ENCODE measurements at regions of chr1 and their contacts with region 1.

Region 1: GRCh38 chr1:8727809-8728213 is 89.6 kb downstream of the RERE start:
- DNase-seq: no peak
- H3K4me3 ChIP-seq: no peak overlapping the region
- H3K27ac ChIP-seq: no peak overlapping the region
- H3K4me1 ChIP-seq: peaks cover 0 to 14% (median 4%) of the 10 kb centered on the region in 4 donors
- H3K27me3 ChIP-seq: no peaks in the 10 kb centered on the region
- CTCF ChIP-seq: no peak

Region 2: DNA sequence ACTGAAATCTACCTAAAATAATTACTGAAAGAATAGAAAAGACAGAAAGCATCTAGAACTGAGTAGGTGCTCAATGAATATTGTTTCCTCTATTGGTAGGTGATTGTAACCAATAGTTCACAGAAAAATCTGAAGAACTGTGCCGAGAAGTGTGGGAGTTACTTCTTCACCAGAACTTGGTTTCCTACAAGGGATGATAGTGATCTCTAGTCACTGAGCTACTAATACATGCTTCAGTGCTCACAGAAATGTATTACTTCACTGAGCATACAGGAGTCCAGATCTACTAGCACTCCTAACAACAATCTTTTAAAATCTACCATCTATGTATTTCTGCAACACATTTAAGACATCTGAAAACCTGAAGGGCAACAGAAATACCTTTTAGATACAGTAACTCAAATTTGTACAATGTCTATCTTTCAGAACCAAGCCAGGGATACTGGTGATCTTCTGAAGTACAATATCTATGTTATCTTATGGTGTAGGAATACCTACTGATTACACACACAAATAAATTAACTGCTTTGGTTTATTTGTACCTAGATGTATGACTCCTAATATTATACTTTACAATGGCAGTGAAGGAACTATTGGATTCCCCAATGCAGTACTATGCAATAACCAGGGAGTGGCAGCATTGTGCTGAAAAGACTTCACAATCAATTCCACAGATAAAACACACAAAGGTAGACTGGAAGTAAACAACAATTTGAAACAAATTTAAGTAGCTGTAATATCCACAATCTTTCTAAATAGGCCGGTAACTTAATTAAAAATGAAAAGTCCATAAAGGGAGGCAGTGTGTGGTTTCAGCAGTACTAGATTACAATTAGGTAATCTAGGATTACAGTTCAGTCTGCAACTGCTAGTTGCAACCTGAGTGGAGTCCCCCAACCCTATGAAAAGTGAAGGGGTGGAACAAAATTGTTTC is 166.9 kb before region 1 on chr1:
- intact Hi-C with region 1: loop called (anchors 5 kb)
- DNase-seq: no peak
- H3K4me3 ChIP-seq: no peak overlapping the region
- H3K27ac ChIP-seq: no peak overlapping the region
- H3K4me1 ChIP-seq: peaks cover 0 to 16% (median 0%) of the 10 kb centered on the region in 4 donors
- H3K27me3 ChIP-seq: no peaks in the 10 kb centered on the region
- CTCF ChIP-seq: peak; percentile 93 to 94

Region 3: DNA sequence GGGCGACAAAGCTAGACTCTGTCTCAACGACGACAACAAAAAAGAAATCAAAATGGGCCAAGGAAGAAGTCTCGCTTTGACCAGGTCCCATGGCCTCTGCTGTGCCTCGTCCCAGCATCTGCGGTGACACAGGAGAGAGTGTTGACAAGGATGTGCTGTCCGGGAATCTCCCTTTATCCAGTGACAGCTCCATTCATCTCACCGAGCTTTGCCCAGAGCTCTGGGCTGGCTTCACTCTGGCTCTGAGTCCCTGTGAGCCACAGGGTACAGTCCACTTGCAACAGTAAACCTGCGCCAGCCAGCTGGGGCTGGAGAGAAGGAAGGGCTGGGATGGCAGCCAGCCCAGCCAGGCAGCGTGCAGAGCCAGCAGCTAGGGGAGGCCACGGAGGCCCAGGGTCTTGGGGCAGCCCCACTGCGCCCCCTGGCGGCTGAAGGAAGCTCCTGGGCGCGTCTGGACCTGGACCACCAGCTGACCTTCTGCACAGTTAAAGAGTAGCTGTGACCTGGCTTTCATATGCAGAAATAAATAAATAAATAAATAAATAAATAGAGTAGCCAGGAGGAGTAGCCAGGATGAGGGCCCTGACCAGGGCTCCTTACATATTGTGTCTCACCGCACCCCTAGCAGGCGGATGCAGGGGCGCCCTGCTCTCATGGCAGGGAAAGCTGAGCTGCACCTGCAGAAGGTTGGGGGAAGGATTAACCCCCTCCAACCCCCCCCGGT is 121.0 kb after region 1 on chr1:
- intact Hi-C with region 1: loop called (anchors 10 kb)
- DNase-seq: peak; percentile 90 to 96
- H3K4me3 ChIP-seq: no peak overlapping the region
- H3K27ac ChIP-seq: peak overlapping the region; percentile 26 to 51
- H3K4me1 ChIP-seq: peaks cover 0 to 31% (median 21%) of the 10 kb centered on the region in 4 donors
- H3K27me3 ChIP-seq: no peaks in the 10 kb centered on the region
- CTCF ChIP-seq: peak; percentile 84